Right ventricle myocardium superior (tissue), 1 donor: ENCODE measurements at regions of chr5 and their contacts with region 1.

Region 1: GRCh38 chr5:77491783-77492652 is at the start of gene WDR41:
- DNase-seq: peak; percentile 96
- ATAC-seq: peak; percentile 98
- total RNA-seq, gene WDR41: 23.8 TPM

Region 2: GRCh38 chr5:77133061-77133758 is 358.8 kb before region 1 on chr5:
- intact Hi-C with region 1: loop called (anchors 10 kb)
- DNase-seq: peak; percentile 58
- ATAC-seq: peak; percentile 87

Region 3: DNA sequence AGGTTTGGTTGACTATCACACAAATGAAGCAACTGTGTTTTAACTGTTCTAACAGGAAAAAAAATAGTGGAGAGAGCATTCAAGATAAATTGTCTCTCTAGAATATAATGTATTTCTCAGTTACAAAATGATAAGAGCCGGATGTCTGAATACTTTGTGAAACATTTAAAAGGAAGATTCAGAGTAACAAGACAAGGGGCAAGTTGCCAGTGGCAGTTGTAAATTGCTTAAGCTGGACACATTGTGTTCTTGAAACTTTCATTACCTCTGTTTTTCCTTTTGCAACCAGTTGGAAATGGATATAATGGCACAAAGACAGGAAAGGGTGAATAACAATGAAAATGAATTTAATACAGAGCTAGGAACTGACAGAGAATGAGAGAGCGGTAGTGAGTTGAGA is 299.3 kb after region 1 on chr5:
- intact Hi-C with region 1: no loop called
- DNase-seq: no peak
- ATAC-seq: no peak